ENCODE measurements at regions of chr13 and their contacts with region 1.

Region 1: DNA sequence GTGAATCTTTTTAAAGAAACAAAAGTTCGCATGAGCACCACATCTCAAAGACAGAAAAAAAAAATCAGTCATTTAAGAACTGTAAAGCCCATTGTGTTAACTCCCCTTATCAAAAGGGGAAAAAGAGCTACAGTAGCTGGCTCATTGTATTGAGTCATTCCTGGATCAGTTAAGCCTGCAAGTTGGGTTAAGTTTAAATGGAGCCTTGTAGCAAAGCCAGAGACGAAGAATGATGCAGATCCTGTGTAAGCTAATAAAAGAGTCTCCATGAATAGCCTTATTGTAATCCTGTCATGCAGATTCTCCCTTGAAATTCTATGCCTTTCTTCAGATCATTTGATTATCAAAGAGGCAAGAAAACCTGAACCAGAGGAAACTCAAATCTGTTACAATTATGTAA is 83.8 kb downstream of the CRYL1 start:
- DNase-seq: peak in 1 of 2 experiments; percentile 67
- H3K4me3 ChIP-seq: no peak overlapping the region
- H3K27ac ChIP-seq: no peak overlapping the region
- H3K4me1 ChIP-seq: peaks cover 14% of the 10 kb centered on the region; the same call in 1 of the 2 replicates
- H3K27me3 ChIP-seq: no peaks in the 10 kb centered on the region
- CTCF ChIP-seq: no peak

Region 2: DNA sequence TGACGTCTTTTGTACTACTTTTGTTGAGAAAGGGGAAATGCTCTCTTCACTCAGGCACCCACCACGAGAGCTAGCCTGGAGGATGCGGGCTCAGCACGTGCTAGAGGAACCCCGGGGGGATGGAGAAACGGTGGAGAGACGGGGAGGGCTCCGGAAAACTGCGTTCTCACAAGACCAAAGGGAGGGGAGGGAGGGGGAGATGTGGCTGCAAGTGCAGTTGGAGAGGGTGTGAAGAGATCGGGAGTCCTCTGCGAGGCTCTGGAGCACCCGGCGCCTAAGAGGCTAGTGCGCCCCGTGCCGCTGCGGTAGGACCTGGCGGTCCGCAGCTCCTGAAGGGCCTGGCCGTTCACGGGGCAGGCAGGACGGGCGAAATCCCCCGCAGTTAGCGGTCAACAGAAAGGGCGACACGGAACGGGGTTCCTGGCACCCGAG is 504.1 kb after region 1 on chr13:
- CTCF ChIA-PET with region 1: interaction called, 11 read pairs
- POLR2A ChIA-PET with region 1: no interaction called
- intact Hi-C with region 1: no loop called
- DNase-seq: no peak
- H3K4me3 ChIP-seq: no peak overlapping the region
- H3K27ac ChIP-seq: no peak overlapping the region
- H3K4me1 ChIP-seq: peaks cover 5% of the 10 kb centered on the region
- H3K27me3 ChIP-seq: no peaks in the 10 kb centered on the region
- CTCF ChIP-seq: no peak

Measured in PC-9 (cell line).